Activated CD8-positive, alpha-beta T cell treated with anti-CD3 and anti-CD28 coated beads for 36 hours (primary cell): ENCODE measurements at regions of chr1 and their contacts with region 1.

Region 1: DNA sequence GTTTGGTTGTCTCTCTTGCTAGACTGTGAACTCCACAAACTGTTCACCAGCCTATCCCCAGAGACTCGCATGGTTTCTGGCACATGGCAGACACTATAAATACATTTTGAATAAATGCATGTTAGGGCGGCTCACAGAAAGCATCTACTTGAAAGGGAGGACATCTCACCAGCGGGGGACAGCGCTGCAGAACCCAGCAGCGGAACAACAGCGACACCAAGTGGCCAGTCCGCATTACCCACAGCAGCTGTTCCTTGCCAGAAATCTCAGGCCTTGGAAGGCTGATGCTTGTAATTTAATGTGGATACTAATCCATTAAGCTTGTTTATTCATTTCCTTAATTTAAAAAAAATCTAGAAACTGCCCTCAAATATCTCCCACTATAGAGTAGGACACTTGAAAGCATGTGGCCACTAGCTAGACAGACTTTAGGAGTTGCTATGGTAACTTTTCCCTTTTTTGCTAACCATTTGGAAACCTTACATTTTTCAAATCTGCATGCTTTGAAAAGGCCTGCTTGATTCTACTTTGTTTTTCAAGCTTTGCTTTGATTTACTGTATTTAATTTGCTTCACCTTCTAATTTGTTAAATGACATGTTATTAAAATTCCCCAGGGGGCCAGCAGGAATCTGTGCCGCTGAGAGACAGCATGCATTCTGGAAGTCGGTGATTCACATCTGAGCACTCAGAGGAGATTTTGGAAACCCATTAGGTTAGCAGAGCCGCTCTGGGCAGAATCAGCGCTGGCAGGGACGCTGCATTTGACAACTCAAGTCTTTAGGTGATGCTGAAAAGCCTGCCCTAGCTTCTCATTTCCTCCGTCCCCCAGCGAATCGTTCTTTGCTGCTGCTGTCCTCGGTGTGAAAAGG is 63.5 kb upstream of the SSX2IP start:
- DNase-seq: peak; percentile 78
- ATAC-seq: peak; percentile 93
- H3K4me3 Mint-ChIP-seq: no peak overlapping the region
- H3K27ac Mint-ChIP-seq: no peak overlapping the region
- H3K4me1 Mint-ChIP-seq: peaks cover 8% of the 10 kb centered on the region
- H3K27me3 Mint-ChIP-seq: peaks cover 6% of the 10 kb centered on the region
- CTCF ChIP-seq: peak; percentile 98

Region 2: DNA sequence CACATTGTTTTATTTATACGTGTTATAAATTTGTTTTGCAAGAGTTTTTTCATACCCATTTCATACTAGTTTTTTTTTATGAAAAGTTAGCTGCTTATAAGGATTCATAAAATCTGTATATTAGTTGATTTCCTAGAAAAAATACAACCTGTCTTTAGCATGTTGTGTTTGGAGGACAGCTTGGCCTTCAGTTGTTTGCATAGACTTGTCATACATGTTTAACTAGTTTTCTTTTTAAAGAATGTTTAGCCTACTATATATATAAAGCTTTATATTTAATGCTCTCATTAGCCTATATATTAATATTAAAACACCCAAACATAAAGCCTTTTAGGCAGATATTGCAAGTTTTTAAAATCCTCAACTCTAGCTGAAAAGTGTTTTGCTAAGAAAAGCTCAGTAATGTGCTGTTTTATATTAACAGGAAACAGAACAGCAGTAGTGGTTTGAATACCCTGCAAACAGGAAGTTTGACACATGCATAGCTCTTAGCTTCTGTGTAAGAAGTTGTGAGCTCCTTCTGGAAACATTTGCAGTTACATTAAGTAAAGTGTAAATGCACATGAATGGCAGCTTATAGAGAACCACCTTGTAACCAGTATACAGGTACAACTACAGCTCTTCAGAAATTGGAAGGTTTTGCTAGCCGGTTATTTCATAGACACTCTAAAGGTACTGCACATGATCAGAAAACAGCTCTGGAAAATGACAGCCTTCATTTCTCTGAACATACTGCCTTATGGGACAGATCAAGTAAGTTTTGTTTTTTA is 609.8 kb before region 1 on chr1 and contains the start of gene PRKACB:
- CTCF ChIA-PET with region 1: interaction called, 13 read pairs
- POLR2A ChIA-PET with region 1: no interaction called
- intact Hi-C with region 1: loop called (anchors 5 kb)
- DNase-seq: no peak
- ATAC-seq: peak; percentile 89
- H3K4me3 Mint-ChIP-seq: peak within 1 kb of the TSS; percentile 83
- H3K27ac Mint-ChIP-seq: peak within 1 kb of the TSS; percentile 99
- H3K4me1 Mint-ChIP-seq: peaks cover 30% of the 10 kb centered on the region
- H3K27me3 Mint-ChIP-seq: no peaks in the 10 kb centered on the region
- CTCF ChIP-seq: no peak
- total RNA-seq, gene PRKACB: 39.9 to 44.7 TPM

Region 3: DNA sequence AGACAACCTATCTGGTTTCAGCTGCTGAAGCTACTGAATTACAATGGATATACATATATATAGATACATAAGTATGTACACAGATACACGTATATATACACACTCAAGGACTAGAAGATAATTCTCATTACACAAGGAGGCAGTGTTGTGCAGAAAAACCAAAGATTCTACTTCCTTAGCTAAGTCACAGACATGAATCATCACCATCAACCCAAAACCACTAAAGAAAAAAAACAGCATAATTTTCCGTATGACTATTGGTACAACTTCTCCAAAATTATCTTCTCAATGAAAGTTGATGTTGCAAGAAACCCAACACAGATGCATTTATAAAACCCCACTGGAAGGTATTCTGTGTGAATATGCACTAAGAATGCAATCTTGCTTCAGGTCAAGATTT is 311.5 kb before region 1 on chr1:
- CTCF ChIA-PET with region 1: interaction called, 22 read pairs
- POLR2A ChIA-PET with region 1: no interaction called
- intact Hi-C with region 1: loop called (anchors 2 kb)
- DNase-seq: no peak
- ATAC-seq: peak; percentile 94
- H3K4me3 Mint-ChIP-seq: no peak overlapping the region
- H3K27ac Mint-ChIP-seq: peak overlapping the region; percentile 26
- H3K4me1 Mint-ChIP-seq: peaks cover 12% of the 10 kb centered on the region
- H3K27me3 Mint-ChIP-seq: peaks cover 3% of the 10 kb centered on the region
- CTCF ChIP-seq: peak; percentile 80

Region 4: DNA sequence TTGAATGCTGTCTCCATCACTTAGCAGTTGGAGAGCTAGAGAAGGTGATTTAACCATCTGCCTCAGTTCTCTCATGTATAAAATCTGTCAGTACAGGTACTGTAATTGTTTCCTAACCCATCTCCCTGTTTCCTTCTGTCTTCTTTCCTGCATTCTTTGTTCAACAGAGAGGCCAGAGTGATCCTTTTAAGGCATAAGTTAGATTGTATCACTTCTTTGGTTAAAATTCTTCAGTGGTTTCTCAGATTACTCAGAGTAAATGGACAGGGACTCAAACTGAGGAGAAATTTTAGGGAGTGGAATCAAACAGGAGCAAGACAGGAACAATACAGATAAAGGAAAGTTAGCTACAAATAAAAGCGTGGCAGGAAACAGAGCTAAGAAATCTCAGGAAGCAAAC is 18.3 kb before region 1 on chr1:
- CTCF ChIA-PET with region 1: interaction called, 24 read pairs
- POLR2A ChIA-PET with region 1: no interaction called
- intact Hi-C with region 1: no loop called
- DNase-seq: no peak
- ATAC-seq: no peak
- H3K4me3 Mint-ChIP-seq: no peak overlapping the region
- H3K27ac Mint-ChIP-seq: no peak overlapping the region
- H3K4me1 Mint-ChIP-seq: no peaks in the 10 kb centered on the region
- H3K27me3 Mint-ChIP-seq: peaks cover 10% of the 10 kb centered on the region
- CTCF ChIP-seq: no peak

Region 5: DNA sequence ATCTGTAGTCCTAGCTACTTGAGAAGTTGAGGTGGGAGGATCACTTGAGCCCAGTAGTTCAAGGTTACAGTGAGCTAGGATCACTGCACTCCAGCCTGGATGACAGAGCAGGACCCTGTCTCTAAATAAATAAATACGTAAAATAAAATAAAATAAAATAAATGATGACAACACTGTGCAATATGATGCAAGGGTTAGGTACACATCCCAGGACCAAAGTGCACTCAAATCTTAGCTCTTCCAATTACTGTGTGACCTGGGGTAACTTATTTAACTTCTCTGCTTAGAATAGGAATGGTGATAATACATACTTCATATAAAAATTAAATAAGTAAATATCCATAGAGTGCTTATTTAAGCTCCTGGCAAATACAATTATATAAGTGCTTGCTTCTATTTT is 85.8 kb after region 1 on chr1:
- CTCF ChIA-PET with region 1: no interaction called
- POLR2A ChIA-PET with region 1: no interaction called
- intact Hi-C with region 1: no loop called
- DNase-seq: no peak
- ATAC-seq: no peak
- H3K4me3 Mint-ChIP-seq: no peak overlapping the region
- H3K27ac Mint-ChIP-seq: no peak overlapping the region
- H3K4me1 Mint-ChIP-seq: peaks cover 4% of the 10 kb centered on the region
- H3K27me3 Mint-ChIP-seq: no peaks in the 10 kb centered on the region
- CTCF ChIP-seq: no peak

Region 6: DNA sequence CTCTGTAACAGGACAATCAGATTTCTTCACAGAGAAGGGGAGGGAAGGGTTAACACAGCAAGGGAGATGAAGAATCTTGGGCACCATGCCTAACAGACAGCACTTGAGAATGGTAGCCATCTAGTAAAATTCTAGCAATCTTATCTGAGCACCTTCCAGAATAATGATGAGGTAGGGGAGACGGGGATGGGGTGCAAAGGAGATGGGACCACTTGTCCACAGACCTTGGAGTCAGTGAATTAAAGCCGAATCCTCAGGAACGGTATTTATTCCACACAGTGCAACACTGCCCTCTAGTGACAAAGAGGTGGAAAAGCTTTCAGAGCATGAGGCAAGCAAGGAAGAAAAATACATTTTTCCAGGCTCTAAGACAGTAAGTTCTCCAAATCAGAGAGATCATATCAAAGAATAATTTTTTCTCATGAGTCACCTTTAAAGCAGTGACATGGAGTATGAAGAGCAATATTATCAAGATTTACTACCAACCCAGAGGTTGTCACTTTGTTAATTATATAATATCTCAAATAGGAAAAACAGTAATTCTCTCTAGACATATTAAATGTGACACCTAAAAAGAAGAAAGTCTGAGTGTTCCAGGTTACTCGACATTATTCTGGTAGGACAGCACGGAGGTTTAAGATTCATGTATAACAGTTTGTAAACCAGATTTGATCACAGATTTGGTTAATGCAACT is 182.5 kb after region 1 on chr1:
- CTCF ChIA-PET with region 1: interaction called, 31 read pairs
- POLR2A ChIA-PET with region 1: no interaction called
- intact Hi-C with region 1: no loop called
- DNase-seq: peak; percentile 23
- ATAC-seq: peak; percentile 77
- H3K4me3 Mint-ChIP-seq: no peak overlapping the region
- H3K27ac Mint-ChIP-seq: no peak overlapping the region
- H3K4me1 Mint-ChIP-seq: peaks cover 3% of the 10 kb centered on the region
- H3K27me3 Mint-ChIP-seq: no peaks in the 10 kb centered on the region
- CTCF ChIP-seq: peak; percentile 96